Adrenal gland (tissue), 19 donors: ENCODE measurements at regions of chr1 and their contacts with region 1.

Region 1: DNA sequence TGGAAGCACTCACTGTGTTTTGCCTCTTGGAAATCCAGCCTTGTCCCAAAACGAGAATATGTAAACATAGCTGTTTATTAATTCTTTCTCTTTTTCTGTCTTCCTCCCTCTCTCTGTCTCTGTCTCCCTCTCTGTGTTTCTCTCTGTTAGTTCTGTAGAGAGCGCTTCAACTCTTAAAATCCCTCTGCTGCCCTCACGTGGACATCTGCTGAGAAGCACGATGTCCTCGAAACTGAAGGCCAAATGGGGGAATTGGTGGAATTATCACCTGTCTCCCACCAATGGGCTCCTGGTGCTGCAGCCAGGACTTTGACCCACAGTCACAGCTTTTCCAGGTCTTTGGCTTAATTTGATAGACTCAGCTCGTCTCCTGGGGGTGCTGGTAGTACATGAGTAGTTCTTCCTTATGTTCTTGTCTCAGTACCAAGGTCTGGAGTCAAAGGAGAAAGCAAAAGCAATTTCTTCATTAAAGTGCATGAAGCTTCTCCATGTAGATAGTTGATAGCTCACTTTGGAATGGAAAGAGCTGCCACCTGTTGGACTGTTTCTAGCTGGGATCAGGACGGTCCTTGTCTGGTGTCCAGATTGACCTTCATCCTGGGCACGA is 5.5 kb upstream of the GBP6 start:
- DNase-seq: peak; percentile 63 to 91 (median 81)
- H3K4me3 ChIP-seq: no peak overlapping the region
- H3K27ac ChIP-seq: no peak overlapping the region
- H3K4me1 ChIP-seq: peaks cover 0 to 6% of the 10 kb centered on the region in 2 donors
- H3K27me3 ChIP-seq: no peaks in the 10 kb centered on the region
- CTCF ChIP-seq: peak; percentile 48 to 89 (median 80)
- POLR2A ChIP-seq: no peak

Region 2: GRCh38 chr1:88998716-88999115 is 359.7 kb before region 1 on chr1:
- intact Hi-C with region 1: loop called (anchors 2 to 5 kb)
- DNase-seq: peak in 1 of 7 donors; percentile 21
- H3K4me3 ChIP-seq: no peak overlapping the region
- H3K27ac ChIP-seq: no peak overlapping the region
- H3K4me1 ChIP-seq: peaks cover 0 to 1% of the 10 kb centered on the region in 2 donors
- H3K27me3 ChIP-seq: no peaks in the 10 kb centered on the region
- CTCF ChIP-seq: peak; percentile 50 to 77 (median 69)
- POLR2A ChIP-seq: no peak

Region 3: DNA sequence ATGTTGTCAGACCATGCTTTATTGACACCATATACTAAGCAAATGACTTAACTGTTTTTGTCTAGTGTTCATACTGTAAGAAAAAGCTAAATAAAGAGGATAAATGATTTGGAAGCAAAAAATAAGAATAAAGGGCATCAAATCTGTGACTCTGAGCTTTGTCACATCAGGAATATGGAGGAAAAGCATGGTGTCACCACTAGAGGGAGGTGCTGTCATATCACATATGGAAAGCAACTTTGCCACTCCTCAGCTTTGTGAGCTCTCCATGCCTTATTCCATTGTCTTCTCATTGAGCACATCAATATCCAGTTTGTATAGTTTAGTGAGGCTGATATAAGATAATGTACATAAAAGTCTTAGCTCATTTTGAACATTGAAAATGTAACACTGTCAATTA is 272.6 kb before region 1 on chr1:
- intact Hi-C with region 1: loop called in 1 of 2 experiments (anchors 10 kb)
- DNase-seq: peak in 5 of 7 donors; percentile 30 to 63 (median 54)
- H3K4me3 ChIP-seq: no peak overlapping the region
- H3K27ac ChIP-seq: no peak overlapping the region
- H3K4me1 ChIP-seq: no peaks in the 10 kb centered on the region
- H3K27me3 ChIP-seq: no peaks in the 10 kb centered on the region
- CTCF ChIP-seq: peak in 4 of 6 experiments; percentile 61 to 77 (median 68)
- POLR2A ChIP-seq: no peak

Region 4: GRCh38 chr1:89112871-89113613 is 245.3 kb before region 1 on chr1:
- intact Hi-C with region 1: loop called in 1 of 2 experiments (anchors 10 kb)
- DNase-seq: no peak
- H3K4me3 ChIP-seq: no peak overlapping the region
- H3K27ac ChIP-seq: no peak overlapping the region
- H3K4me1 ChIP-seq: no peaks in the 10 kb centered on the region
- H3K27me3 ChIP-seq: no peaks in the 10 kb centered on the region
- CTCF ChIP-seq: no peak
- POLR2A ChIP-seq: no peak

Region 5: GRCh38 chr1:89259283-89259971 is 99.0 kb before region 1 on chr1:
- intact Hi-C with region 1: loop called in 1 of 2 experiments (anchors 10 kb)
- DNase-seq: no peak
- H3K4me3 ChIP-seq: no peak overlapping the region
- H3K27ac ChIP-seq: no peak overlapping the region
- H3K4me1 ChIP-seq: no peaks in the 10 kb centered on the region
- H3K27me3 ChIP-seq: no peaks in the 10 kb centered on the region
- CTCF ChIP-seq: no peak
- POLR2A ChIP-seq: no peak